ENCODE measurements at regions of chr15 and their contacts with region 1.

Region 1: DNA sequence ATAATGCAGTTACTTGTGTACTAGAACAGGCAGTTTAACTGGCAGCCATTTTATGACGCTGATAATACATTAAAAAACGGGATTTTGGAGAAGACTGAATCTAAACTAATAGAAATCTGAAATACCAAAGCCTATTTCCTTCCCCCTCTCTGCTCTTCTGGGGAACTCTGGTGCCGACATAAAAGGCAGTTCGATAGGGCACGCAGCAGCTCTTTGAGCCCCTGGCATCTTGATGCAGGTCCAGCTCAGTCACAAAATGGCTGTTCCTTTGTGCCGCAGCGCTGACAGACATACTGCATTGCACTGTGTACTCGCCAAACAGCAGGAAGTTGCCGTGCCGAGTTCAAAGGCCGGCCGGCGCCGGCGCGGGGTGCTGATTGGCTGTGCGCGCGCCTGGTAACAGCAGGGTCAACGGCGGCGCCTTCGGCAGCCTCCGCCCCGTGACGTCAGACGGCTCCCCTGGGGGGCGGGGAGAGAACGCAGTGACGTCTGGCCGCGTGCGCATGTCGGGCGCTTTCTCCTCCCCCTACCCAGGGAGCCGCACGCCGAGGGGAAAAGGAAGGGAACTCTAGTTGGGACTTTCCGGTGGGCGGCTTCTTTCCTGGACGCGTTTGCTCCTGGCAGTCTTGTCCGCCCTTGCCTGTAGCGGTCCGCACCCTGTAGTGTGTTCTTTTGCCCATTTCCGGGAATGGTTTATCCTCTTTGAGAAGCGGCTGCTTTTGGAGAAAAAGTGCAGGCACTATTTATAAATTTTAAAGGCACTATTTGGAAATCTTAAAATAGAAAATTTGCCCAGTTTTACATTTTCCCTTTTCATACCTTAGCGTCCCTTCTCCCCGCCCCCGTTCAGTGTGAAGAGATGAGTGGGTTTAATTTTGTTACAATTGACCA is 4.1 kb downstream of the CHD2 start:
- DNase-seq: peak; percentile 100
- ATAC-seq: peak; percentile 80
- H3K4me3 Mint-ChIP-seq: peak overlapping the region; percentile 81
- H3K27ac Mint-ChIP-seq: peak overlapping the region; percentile 98
- H3K4me1 Mint-ChIP-seq: peaks cover 48% of the 10 kb centered on the region
- H3K27me3 Mint-ChIP-seq: no peaks in the 10 kb centered on the region

Region 2: GRCh38 chr15:92803847-92804609 is 100.2 kb before region 1 on chr15:
- CTCF ChIA-PET with region 1: interaction called, 80 read pairs
- POLR2A ChIA-PET with region 1: interaction called, 36 read pairs
- intact Hi-C with region 1: loop called (anchors 1 kb)
- DNase-seq: peak; percentile 91
- ATAC-seq: peak; percentile 86
- H3K4me3 Mint-ChIP-seq: peak overlapping the region; percentile 17
- H3K27ac Mint-ChIP-seq: peak overlapping the region; percentile 94
- H3K4me1 Mint-ChIP-seq: peaks cover 36% of the 10 kb centered on the region
- H3K27me3 Mint-ChIP-seq: no peaks in the 10 kb centered on the region

Region 3: GRCh38 chr15:92820236-92821021 is 83.8 kb before region 1 on chr15:
- CTCF ChIA-PET with region 1: interaction called, 11 read pairs
- POLR2A ChIA-PET with region 1: interaction called, 6 read pairs
- intact Hi-C with region 1: loop called in 1 of 2 experiments (anchors 1 kb)
- DNase-seq: peak; percentile 92
- ATAC-seq: peak; percentile 63
- H3K4me3 Mint-ChIP-seq: peak overlapping the region; percentile 82
- H3K27ac Mint-ChIP-seq: peak overlapping the region; percentile 77
- H3K4me1 Mint-ChIP-seq: peaks cover 64% of the 10 kb centered on the region
- H3K27me3 Mint-ChIP-seq: no peaks in the 10 kb centered on the region

Region 4: DNA sequence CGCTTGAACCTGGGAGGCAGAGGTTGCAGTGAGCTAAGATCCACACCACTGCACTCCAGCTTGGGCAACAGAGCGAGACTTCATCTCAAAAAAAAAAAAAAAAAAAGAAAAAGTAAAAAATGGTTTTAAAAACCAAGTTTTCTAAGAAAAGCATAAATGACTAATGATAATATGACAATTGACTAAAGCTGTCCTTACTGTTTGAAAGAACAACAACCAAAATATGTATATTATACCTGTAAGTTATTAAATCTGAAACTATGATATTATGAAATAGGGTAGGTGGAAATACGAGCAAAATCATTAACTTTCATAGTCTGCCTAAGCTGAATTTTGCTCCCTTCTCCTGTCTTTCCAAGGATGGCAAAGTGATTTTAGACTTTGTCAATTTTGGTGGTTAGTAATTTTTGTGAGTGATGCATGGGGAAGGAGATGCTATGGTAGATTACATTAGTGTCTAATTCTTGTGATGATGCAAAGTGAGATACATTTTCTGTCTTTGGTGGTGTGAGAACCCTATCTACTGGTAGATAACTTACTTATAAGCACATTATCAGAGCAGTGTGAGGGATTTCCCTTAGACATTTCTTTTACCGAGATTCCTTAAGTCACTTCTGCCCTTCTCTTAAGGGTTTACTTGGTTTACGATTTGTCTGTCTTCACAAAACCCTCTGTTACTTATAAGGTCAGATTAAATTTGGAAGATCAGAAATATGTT is 14.6 kb before region 1 on chr15:
- CTCF ChIA-PET with region 1: interaction called, 61 read pairs
- POLR2A ChIA-PET with region 1: interaction called, 111 read pairs
- intact Hi-C with region 1: loop called (anchors 1 kb)
- DNase-seq: no peak
- ATAC-seq: peak; percentile 77
- H3K4me3 Mint-ChIP-seq: peak overlapping the region; percentile 65
- H3K27ac Mint-ChIP-seq: peak overlapping the region; percentile 91
- H3K4me1 Mint-ChIP-seq: peaks cover 66% of the 10 kb centered on the region
- H3K27me3 Mint-ChIP-seq: no peaks in the 10 kb centered on the region

Region 5: GRCh38 chr15:94097552-94097951 is 1193.4 kb after region 1 on chr15:
- CTCF ChIA-PET with region 1: no interaction called
- POLR2A ChIA-PET with region 1: no interaction called
- intact Hi-C with region 1: no loop called
- DNase-seq: no peak
- ATAC-seq: no peak
- H3K4me3 Mint-ChIP-seq: no peak overlapping the region
- H3K27ac Mint-ChIP-seq: no peak overlapping the region
- H3K4me1 Mint-ChIP-seq: no peaks in the 10 kb centered on the region
- H3K27me3 Mint-ChIP-seq: peaks cover 8% of the 10 kb centered on the region

Region 6: DNA sequence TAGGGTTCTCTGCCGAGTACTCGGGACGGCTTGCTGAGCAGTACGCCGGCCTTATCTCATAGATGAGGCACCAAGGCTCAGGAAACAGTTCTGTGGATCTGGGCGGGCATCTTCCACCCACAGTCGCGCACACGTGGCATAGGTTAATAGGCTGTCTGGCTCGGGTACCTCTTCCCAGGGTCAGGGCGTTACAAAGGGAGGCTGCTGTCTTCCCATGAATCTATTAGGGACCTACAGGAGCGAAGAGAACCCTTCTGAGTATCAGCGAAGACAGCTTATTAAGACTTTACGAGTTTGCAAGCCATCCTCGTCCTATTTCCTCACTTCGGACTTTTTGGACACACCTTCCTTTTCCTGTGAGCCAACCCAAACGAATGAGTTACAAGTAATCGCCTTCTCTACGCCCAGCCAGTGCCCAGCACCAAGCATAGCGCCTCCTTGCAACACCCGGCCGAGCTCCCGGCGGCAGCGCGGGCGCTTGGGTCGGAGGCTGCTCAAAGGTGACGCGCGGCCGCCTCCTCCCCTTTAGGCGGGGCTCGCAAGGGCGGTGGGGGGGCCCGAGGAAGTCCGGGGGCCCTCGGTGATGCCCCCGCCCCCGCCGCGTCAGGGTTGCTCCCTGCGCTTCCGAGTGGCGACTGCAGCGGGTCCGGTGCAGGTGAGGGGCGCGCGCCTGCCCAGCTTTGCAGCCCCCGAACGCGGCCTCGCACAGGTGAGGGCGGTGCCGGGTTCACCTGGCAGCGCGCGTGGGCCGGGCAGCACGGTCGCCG is 1327.0 kb after region 1 on chr15 and contains the start of gene MCTP2:
- CTCF ChIA-PET with region 1: no interaction called
- POLR2A ChIA-PET with region 1: no interaction called
- intact Hi-C with region 1: loop called in 1 of 2 experiments (anchors 5 kb)
- DNase-seq: peak; percentile 91
- ATAC-seq: peak; percentile 82
- H3K4me3 Mint-ChIP-seq: peak within 1 kb of the TSS; percentile 80
- H3K27ac Mint-ChIP-seq: peak within 1 kb of the TSS; percentile 94
- H3K4me1 Mint-ChIP-seq: peaks cover 67% of the 10 kb centered on the region
- H3K27me3 Mint-ChIP-seq: peaks cover 11% of the 10 kb centered on the region
- total RNA-seq, gene MCTP2: 25.2 to 27.8 TPM

Measured in activated CD4-positive, alpha-beta T cell treated with anti-CD3 and anti-CD28 coated beads for 36 hours (primary cell).